ENCODE measurements at regions of chr6 and their contacts with region 1.

Region 1: GRCh38 chr6:53437557-53438202 is 88.9 kb upstream of the ELOVL5 start:
- DNase-seq: peak; percentile 65
- H3K4me3 Mint-ChIP-seq: no peak overlapping the region
- H3K27ac Mint-ChIP-seq: no peak overlapping the region
- H3K4me1 Mint-ChIP-seq: peaks cover 10% of the 10 kb centered on the region
- H3K27me3 Mint-ChIP-seq: peaks cover 3% of the 10 kb centered on the region

Region 2: GRCh38 chr6:53359072-53359842 is 78.4 kb before region 1 on chr6:
- intact Hi-C with region 1: loop called (anchors 10 kb)
- DNase-seq: peak; percentile 98
- H3K4me3 Mint-ChIP-seq: peak overlapping the region; percentile 92
- H3K27ac Mint-ChIP-seq: peak overlapping the region; percentile 100
- H3K4me1 Mint-ChIP-seq: peaks cover 39% of the 10 kb centered on the region
- H3K27me3 Mint-ChIP-seq: peaks cover 6% of the 10 kb centered on the region

Region 3: GRCh38 chr6:53410508-53411258 is 27.0 kb before region 1 on chr6:
- intact Hi-C with region 1: loop called (anchors 2 kb)
- DNase-seq: peak; percentile 85
- H3K4me3 Mint-ChIP-seq: no peak overlapping the region
- H3K27ac Mint-ChIP-seq: no peak overlapping the region
- H3K4me1 Mint-ChIP-seq: no peaks in the 10 kb centered on the region
- H3K27me3 Mint-ChIP-seq: peaks cover 3% of the 10 kb centered on the region

Region 4: DNA sequence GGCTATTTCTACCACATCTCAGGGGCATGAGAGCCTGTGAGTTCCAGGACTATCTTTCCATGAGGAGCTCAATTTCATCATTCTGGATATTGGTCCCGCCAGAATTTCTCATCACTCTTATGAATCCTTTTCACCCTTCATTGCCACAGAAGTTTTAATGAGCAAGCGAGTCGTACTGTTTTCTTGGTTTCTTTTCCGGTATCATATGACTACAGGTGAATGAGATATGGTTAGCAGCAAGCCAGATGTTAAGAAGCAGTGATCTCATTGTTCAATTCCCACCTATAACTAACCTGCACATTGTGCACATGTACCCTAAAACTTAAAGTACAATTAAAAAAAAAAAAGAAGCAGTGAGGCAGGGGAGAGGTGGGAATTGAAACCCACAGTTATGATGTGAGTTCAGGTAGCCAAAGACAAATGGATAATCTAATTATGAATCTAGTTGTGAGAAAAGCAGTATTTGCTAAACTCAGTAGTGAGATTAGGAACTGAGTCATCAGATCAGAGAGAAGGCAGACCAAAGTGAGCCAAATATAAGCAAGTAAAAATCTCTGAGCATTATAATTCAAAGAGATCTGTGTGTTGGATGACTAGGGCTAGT is 10.9 kb before region 1 on chr6:
- intact Hi-C with region 1: loop called (anchors 2 kb)
- DNase-seq: no peak
- H3K4me3 Mint-ChIP-seq: no peak overlapping the region
- H3K27ac Mint-ChIP-seq: no peak overlapping the region
- H3K4me1 Mint-ChIP-seq: peaks cover 19% of the 10 kb centered on the region
- H3K27me3 Mint-ChIP-seq: peaks cover 14% of the 10 kb centered on the region